ENCODE measurements at regions of chr5 and their contacts with region 1.

Region 1: GRCh38 chr5:73792687-73793320 is 166.8 kb downstream of the ARHGEF28 start:
- DNase-seq: peak; percentile 67
- H3K4me3 ChIP-seq: no peak overlapping the region
- H3K27ac ChIP-seq: no peak overlapping the region
- H3K4me1 ChIP-seq: peaks cover 3 to 10% of the 10 kb centered on the region in 2 experiments; a peak in 3 of 4 replicates
- H3K27me3 ChIP-seq: no peaks in the 10 kb centered on the region
- CTCF ChIP-seq: peak; percentile 99
- EP300 ChIP-seq: no peak
- RAD21 ChIP-seq: peak; percentile 99

Region 2: GRCh38 chr5:73625944-73626811 is 166.6 kb before region 1 on chr5 and contains the start of gene ARHGEF28:
- CTCF ChIA-PET with region 1: interaction called, 10 read pairs
- POLR2A ChIA-PET with region 1: no interaction called
- DNase-seq: peak; percentile 92
- H3K4me3 ChIP-seq: peak within 1 kb of the TSS; percentile 76 to 85
- H3K27ac ChIP-seq: peak within 1 kb of the TSS; percentile 16 to 53; a peak in 2 of 4 replicates
- H3K4me1 ChIP-seq: peaks cover 3 to 13% of the 10 kb centered on the region in 2 experiments; a peak in 3 of 4 replicates
- H3K27me3 ChIP-seq: no peaks in the 10 kb centered on the region
- CTCF ChIP-seq: no peak
- EP300 ChIP-seq: peak in 1 of 2 experiments; percentile 34; a peak in 1 of 4 replicates
- RAD21 ChIP-seq: no peak
- polyA plus RNA-seq, gene ARHGEF28: 3.7 and 4.2 TPM in 2 replicates

Region 3: DNA sequence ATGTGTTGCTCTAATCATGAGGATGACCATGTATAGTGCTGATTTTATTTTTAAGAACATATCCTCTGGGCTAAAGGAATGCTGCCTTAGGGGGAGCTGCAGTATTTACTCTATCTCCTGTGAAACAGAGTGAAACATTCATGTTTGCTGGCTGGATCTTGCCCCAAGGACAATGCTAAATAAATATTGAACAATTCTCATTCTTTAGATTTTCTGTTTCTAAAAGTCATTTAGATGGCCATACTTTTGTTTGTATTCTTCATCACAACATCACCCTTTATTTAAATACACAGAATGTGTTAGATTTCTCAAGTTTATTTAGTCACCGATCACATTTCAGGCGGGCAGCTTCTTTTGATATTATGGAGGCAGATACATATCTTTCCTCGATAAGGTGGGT is 63.5 kb before region 1 on chr5:
- CTCF ChIA-PET with region 1: interaction called, 10 read pairs
- POLR2A ChIA-PET with region 1: no interaction called
- DNase-seq: no peak
- H3K4me3 ChIP-seq: no peak overlapping the region
- H3K27ac ChIP-seq: no peak overlapping the region
- H3K4me1 ChIP-seq: no peaks in the 10 kb centered on the region; a peak in 2 of 4 replicates
- H3K27me3 ChIP-seq: no peaks in the 10 kb centered on the region
- CTCF ChIP-seq: no peak
- EP300 ChIP-seq: no peak
- RAD21 ChIP-seq: no peak

Measured in SK-N-SH (cell line).